Right ventricle myocardium superior (tissue), 1 donor: ENCODE measurements at regions of chr7 and their contacts with region 1.

Region 1: DNA sequence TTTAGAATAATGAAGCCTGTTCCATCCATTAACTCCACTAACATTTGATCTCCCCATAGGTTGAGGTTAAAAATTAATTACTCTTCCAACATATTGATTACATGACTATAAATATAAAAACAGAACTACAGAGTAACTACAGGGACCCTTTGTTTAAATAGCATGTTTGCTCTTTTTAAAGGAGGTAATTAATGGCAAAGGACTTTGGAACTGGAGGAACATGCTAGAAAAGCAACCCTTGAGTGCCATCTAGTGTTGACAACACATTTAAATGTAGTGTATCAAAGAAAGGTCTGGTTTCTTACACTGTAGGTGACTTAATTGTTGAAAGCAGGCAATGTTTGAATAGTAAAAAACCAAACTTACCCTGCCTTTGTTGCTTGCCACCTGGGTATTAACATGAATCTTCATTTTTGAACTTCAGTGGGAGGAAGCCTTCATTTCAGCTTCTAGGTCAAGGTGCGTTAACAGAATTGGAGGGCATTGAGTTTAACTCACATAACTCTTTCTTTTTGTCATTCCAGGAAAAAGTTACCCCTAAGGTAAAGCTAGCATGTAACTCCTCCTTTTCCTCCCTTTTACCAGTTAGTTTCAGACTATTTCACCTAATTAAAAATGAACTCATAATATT is 52.6 kb upstream of the CAPZA2 start:
- DNase-seq: no peak
- ATAC-seq: peak; percentile 80

Region 2: GRCh38 chr7:116173051-116174028 is 636.4 kb before region 1 on chr7:
- intact Hi-C with region 1: loop called (anchors 5 kb)
- DNase-seq: no peak
- ATAC-seq: peak; percentile 71

Region 3: GRCh38 chr7:116258734-116259133 is 551.0 kb before region 1 on chr7:
- intact Hi-C with region 1: loop called (anchors 5 kb)
- DNase-seq: no peak
- ATAC-seq: peak; percentile 71

Region 4: DNA sequence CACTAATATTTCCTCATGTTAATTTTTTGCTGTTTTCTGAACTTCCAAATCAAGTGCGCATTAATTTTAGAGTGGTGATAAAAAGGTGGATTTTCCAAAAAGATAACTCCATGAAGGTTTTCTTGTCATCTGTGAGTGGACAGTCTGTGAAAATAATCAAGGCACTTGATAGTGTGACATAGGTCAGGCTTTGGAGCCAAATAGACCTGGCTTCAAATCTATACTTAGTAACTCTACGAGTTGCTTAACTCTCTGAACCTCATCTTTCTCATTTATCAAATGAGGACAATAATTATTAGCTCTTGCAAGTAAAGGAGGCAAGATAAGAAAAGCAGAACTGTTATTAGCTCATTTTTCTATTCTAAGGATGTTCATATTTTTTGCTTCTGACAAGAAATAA is 162.5 kb before region 1 on chr7:
- intact Hi-C with region 1: no loop called
- DNase-seq: no peak
- ATAC-seq: peak; percentile 79

Region 5: GRCh38 chr7:116671681-116672595 is 137.8 kb before region 1 on chr7 and contains the start of gene MET:
- intact Hi-C with region 1: loop called (anchors 5 kb)
- DNase-seq: peak; percentile 78
- ATAC-seq: peak; percentile 92
- total RNA-seq, gene MET: 14.3 TPM

Region 6: DNA sequence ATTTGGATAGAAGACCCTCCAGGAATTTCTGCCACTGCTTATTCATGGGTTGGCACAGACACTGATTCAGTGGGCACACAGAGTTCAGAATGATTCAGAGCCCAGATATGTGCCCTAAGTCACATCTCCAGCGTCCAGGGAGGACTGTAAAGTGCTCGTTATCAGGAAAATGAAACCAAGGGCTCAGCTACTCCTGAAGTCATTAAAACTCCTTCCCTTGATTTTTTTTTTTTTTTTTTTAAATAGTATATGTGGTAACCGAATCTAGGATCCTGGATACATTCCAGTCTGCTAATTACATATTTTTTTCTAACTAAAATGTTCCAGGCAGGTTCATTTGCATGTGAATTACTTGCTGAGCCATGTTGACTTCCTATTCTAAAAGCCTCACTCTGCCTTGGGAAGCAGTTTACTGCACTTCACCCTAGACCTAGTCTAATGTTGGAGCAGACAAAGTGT is 103.1 kb before region 1 on chr7:
- intact Hi-C with region 1: no loop called
- DNase-seq: no peak
- ATAC-seq: no peak